ENCODE measurements at regions of chr22 and their contacts with region 1.

Region 1: GRCh38 chr22:42560781-42561180 is 7.0 kb downstream of the SERHL2 start:
- DNase-seq: no peak
- H3K4me3 ChIP-seq: no peak overlapping the region
- H3K27ac ChIP-seq: no peak overlapping the region
- H3K4me1 ChIP-seq: no peaks in the 10 kb centered on the region
- H3K27me3 ChIP-seq: no peaks in the 10 kb centered on the region
- CTCF ChIP-seq: peak in 1 of 3 donors; percentile 29
- POLR2A ChIP-seq: no peak

Region 2: GRCh38 chr22:41191467-41191866 is 1369.3 kb before region 1 on chr22:
- intact Hi-C with region 1: loop called (anchors 5 kb)
- DNase-seq: peak in 1 of 2 donors; percentile 15
- H3K4me3 ChIP-seq: no peak overlapping the region
- H3K27ac ChIP-seq: no peak overlapping the region
- H3K4me1 ChIP-seq: no peaks in the 10 kb centered on the region
- H3K27me3 ChIP-seq: no peaks in the 10 kb centered on the region
- CTCF ChIP-seq: no peak
- POLR2A ChIP-seq: no peak

Measured in breast epithelium (tissue), 4 donors.